Adrenal gland (tissue), 19 donors: ENCODE measurements at regions of chr4 and their contacts with region 1.

Region 1: DNA sequence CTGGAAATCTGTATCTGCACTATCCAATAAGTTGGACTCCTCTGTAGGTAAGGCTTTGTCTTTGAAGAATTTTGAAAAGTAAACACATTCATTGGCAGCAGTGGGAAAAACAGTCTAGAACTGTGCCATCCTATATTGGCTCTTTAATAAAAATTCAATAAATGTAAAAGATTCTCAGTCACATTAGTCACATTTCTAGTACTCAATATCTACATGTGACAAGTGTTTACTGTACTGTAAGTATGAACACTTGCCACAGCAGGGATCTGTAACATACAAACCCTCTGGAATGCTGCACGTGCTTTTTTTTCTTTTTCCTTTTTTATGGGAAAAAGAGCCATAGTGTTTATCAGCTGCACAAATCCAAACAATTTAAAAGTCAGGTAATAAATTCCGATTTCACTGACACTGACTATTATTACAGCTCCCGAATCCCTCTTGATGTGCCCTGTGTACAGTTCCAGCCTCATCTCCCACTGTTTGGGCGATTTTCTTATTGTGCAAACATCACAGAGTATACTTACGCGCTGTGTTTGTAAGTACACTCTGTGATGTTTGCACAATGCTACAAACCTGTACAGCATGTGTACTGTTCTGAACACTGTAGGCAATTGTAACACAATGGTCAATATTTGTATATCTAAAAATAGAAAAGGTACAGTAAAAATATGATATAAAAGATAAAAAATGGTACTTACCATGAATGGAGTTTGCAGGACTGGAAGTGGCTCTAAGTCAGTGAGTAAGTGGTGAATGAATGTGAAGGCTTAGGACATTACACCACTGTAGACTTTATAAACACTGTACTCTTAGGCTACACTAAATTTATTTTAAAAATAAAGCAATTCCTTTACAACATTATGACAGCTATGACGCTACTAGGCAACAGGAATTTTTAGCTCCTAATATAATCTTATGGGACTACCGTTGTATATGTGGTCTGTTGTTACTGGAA is 8.7 kb downstream of the PYURF start:
- DNase-seq: no peak
- H3K4me3 ChIP-seq: no peak overlapping the region
- H3K27ac ChIP-seq: no peak overlapping the region
- H3K4me1 ChIP-seq: no peaks in the 10 kb centered on the region
- H3K27me3 ChIP-seq: no peaks in the 10 kb centered on the region
- CTCF ChIP-seq: no peak
- POLR2A ChIP-seq: no peak

Region 2: GRCh38 chr4:88033309-88033708 is 481.5 kb before region 1 on chr4:
- intact Hi-C with region 1: loop called in 1 of 2 experiments (anchors 10 kb)
- DNase-seq: peak; percentile 24 to 66 (median 59)
- H3K4me3 ChIP-seq: no peak overlapping the region
- H3K27ac ChIP-seq: no peak overlapping the region
- H3K4me1 ChIP-seq: peaks cover 11 to 12% of the 10 kb centered on the region in 2 donors
- H3K27me3 ChIP-seq: no peaks in the 10 kb centered on the region
- CTCF ChIP-seq: peak; percentile 57 to 85 (median 66)
- POLR2A ChIP-seq: no peak

Region 3: GRCh38 chr4:88223516-88223915 is 291.3 kb before region 1 on chr4:
- intact Hi-C with region 1: loop called (anchors 5 kb)
- DNase-seq: no peak
- H3K4me3 ChIP-seq: no peak overlapping the region
- H3K27ac ChIP-seq: no peak overlapping the region
- H3K4me1 ChIP-seq: no peaks in the 10 kb centered on the region
- H3K27me3 ChIP-seq: no peaks in the 10 kb centered on the region
- CTCF ChIP-seq: no peak
- POLR2A ChIP-seq: no peak

Region 4: DNA sequence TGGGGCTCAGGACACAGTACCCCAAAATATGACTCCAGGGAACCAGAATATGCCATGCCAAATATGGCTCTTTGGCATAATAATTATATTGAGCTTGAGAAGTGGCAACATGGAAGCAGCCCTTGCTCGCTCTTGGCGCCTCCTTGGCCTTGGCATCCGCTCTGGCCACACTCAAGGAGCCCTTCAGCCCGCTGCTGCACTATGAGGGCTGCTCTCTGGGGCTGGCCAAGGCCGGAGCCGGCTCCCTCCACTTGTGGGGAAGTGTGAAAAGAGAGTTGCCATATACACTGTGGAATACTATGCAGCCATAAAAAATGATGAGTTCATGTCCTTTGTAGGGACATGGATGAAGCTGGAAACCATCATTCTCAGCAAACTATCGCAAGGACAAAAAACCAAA is 154.6 kb before region 1 on chr4:
- intact Hi-C with region 1: loop called in 1 of 2 experiments (anchors 5 kb)
- DNase-seq: no peak
- H3K4me3 ChIP-seq: no peak overlapping the region
- H3K27ac ChIP-seq: no peak overlapping the region
- H3K4me1 ChIP-seq: no peaks in the 10 kb centered on the region
- H3K27me3 ChIP-seq: no peaks in the 10 kb centered on the region
- CTCF ChIP-seq: no peak
- POLR2A ChIP-seq: no peak

Region 5: DNA sequence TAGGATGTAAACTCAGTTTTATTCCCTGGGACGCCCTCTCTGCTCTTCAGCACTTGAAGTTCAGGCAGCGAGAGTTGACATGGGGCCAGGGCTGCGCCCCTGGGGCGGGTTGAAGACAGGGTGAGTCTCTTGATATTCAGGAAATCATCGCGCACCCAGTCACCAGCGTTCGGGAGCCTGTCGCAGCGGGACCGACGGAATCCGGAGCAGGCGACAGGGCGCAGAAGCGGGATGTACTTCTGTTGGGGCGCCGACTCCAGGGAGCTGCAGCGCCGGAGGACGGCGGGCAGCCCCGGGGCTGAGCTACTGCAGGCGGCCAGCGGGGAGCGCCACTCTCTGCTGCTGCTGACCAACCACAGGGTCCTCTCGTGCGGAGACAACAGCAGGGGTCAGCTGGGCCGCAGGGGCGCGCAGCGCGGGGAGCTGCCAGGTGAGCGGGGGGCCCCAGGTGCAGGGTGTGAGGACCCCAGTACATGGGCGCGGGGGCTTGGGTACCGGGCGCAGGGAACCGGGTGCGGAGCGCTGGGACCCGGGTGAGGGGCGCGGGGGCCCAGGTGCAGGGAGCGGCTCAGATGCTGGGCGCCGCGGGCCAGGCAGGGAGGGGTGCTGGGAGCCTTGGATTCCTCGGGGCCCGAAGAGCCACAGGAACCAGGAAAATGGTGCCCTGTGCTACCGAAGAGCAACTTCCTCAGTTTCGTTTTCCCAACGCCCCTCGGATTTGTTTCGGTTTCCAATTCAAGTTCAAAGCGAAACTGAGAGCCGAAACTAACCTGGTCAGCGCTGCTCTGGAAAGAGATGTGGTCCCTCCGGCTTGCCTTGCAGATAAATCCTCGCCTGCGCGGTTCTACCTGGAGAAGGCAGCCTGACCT is 135.9 kb before region 1 on chr4 and contains the start of gene HERC6:
- intact Hi-C with region 1: loop called (anchors 5 kb)
- DNase-seq: peak; percentile 79 to 94 (median 87)
- H3K4me3 ChIP-seq: peak within 1 kb of the TSS; percentile 69 to 100 (median 84)
- H3K27ac ChIP-seq: peak within 1 kb of the TSS; percentile 87 to 100 (median 94)
- H3K4me1 ChIP-seq: peaks cover 0 to 3% of the 10 kb centered on the region in 2 donors
- H3K27me3 ChIP-seq: no peaks in the 10 kb centered on the region
- CTCF ChIP-seq: peak; percentile 47 to 89 (median 73)
- POLR2A ChIP-seq: peak in 1 of 2 donors; percentile 40
- total RNA-seq, gene HERC6: 4.1 to 15.9 (median 12.4) TPM

Region 6: DNA sequence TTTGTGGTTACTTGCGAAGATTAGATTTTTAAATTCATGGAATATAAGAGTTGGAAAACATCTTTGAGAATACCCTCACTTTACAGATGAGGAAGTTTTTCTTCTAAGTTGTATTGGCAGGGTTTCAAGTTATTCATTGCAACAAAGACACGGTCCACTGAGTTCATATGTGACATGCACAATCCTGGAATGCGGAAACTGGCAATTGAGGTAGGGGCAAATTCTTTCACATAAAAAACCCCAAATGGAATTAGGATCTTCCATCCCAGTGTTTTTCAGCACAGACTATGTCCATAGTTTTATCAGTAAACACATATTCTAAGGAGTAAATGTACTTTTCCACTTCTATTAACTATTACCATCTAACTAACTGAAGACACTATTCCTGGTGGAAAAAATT is 264.6 kb after region 1 on chr4:
- intact Hi-C with region 1: no loop called
- DNase-seq: no peak
- H3K4me3 ChIP-seq: no peak overlapping the region
- H3K27ac ChIP-seq: no peak overlapping the region
- H3K4me1 ChIP-seq: no peaks in the 10 kb centered on the region
- H3K27me3 ChIP-seq: no peaks in the 10 kb centered on the region
- CTCF ChIP-seq: no peak
- POLR2A ChIP-seq: no peak

Region 7: GRCh38 chr4:88803600-88804096 is 288.8 kb after region 1 on chr4:
- intact Hi-C with region 1: no loop called
- DNase-seq: peak in 4 of 7 donors; percentile 38 to 48 (median 40)
- H3K4me3 ChIP-seq: no peak overlapping the region
- H3K27ac ChIP-seq: peak overlapping the region in 2 of 5 donors; percentile 23 to 42
- H3K4me1 ChIP-seq: peaks cover 0 to 34% of the 10 kb centered on the region in 2 donors
- H3K27me3 ChIP-seq: no peaks in the 10 kb centered on the region
- CTCF ChIP-seq: no peak
- POLR2A ChIP-seq: no peak